ENCODE measurements at regions of chr10 and their contacts with region 1.

Region 1: DNA sequence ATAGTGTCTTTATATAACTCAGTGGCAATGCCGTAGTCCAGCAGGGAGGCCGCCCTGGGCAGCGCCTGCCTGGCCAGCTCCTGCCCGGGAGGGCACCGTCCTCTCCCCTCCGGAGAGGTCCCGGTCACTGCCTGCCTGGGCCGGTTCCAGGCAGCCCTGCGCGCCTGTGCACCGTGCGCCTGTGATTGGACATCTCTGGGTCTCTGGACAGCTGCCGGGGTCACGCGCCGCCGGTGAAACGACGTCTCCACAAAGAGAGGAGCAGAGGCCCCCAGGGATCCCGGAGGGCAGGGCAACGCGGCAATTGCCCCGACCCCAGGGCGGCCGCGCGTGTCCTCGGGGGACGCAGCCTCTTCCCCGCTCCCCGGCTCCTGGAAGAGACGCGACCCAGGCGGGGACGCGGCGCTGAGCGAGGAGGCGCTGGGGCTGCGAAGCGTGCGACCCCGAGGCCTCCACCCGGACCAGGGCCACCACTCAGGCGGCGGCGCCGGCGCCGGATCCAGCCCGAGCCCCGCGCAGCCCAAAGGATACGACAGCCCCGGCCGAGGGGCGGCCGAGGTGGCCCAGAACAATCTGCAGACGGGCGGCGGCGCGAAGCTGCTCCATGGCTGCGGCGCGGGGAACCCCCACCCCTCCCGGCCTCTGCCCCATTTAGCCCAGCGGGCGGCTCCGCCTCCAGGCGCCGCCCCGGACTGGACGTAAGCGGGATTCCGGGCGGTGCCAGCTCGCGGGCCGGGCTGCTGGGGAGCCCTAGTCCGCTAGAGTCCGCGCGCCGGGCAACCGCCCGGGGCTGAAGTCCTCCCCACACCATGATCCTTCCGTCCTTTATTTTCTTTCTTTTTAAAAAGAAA is at the start of gene PHYH:
- DNase-seq: peak; percentile 78
- H3K4me3 ChIP-seq: peak within 1 kb of the TSS; percentile 63 to 68 (median 64)
- H3K27ac ChIP-seq: peak within 1 kb of the TSS; percentile 72
- H3K4me1 ChIP-seq: peaks cover 5% of the 10 kb centered on the region
- H3K27me3 ChIP-seq: no peaks in the 10 kb centered on the region
- CTCF ChIP-seq: no peak
- POLR2A ChIP-seq: peak; percentile 89
- total RNA-seq, gene PHYH: 9.4 and 9.8 TPM in 2 replicates

Region 2: GRCh38 chr10:13206546-13207443 is 92.9 kb before region 1 on chr10:
- CTCF ChIA-PET with region 1: interaction called, 34 read pairs
- POLR2A ChIA-PET with region 1: no interaction called
- dilution Hi-C with region 1: no loop called
- intact Hi-C with region 1: loop called (anchors 1 kb)
- DNase-seq: peak; percentile 49
- H3K4me3 ChIP-seq: no peak overlapping the region
- H3K27ac ChIP-seq: no peak overlapping the region
- H3K4me1 ChIP-seq: no peaks in the 10 kb centered on the region
- H3K27me3 ChIP-seq: no peaks in the 10 kb centered on the region
- CTCF ChIP-seq: peak; percentile 31 to 49
- POLR2A ChIP-seq: no peak

Region 3: GRCh38 chr10:13271552-13272163 is 28.0 kb before region 1 on chr10:
- CTCF ChIA-PET with region 1: interaction called, 26 read pairs
- POLR2A ChIA-PET with region 1: no interaction called
- dilution Hi-C with region 1: no loop called
- intact Hi-C with region 1: loop called (anchors 1 kb)
- DNase-seq: peak; percentile 14
- H3K4me3 ChIP-seq: no peak overlapping the region
- H3K27ac ChIP-seq: no peak overlapping the region
- H3K4me1 ChIP-seq: no peaks in the 10 kb centered on the region
- H3K27me3 ChIP-seq: no peaks in the 10 kb centered on the region
- CTCF ChIP-seq: peak; percentile 46 to 61
- POLR2A ChIP-seq: no peak

Region 4: DNA sequence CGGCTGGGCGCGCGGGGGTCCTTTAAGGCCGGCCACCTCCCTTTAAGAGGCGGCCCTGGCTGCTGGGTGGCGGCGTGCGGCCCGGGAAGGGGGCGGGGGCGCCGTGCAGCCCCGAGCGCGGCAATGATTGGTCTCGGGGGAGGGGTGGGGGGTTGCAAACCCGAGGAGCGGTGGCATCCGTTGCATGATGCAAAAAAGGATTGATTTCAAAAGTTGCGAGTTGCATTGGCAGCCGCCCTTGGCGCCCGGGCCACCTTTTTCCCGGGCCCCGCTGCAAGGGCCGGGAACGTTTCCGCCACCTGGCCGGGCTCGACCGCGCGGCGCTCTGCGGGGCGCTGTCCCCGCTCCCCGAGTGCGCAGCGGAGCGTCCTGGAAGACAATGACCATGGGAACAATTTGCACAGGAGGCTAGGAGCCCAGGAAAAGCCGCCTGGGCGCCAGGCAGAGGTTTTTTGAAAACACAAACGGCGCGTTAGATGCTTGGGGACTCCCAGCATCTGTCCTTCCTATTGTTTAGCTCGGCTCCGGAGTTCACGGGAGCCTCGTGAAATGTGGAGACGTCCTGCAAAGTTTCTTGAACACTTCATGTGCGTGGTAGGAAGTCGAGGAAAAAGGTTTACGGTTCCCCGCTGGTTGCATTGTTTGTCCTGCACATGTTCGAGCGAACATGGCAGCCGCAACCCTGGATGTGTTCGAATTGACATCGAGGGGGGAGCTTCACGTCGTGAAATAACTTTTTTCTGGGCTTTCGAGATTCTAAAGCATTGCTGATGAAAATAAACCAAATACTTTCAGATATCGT is 48.8 kb after region 1 on chr10 and contains the start of gene SEPHS1:
- CTCF ChIA-PET with region 1: interaction called, 3 read pairs
- POLR2A ChIA-PET with region 1: no interaction called
- dilution Hi-C with region 1: no loop called
- intact Hi-C with region 1: loop called (anchors 1 kb)
- DNase-seq: peak; percentile 62
- H3K4me3 ChIP-seq: peak within 1 kb of the TSS; percentile 40 to 84 (median 82)
- H3K27ac ChIP-seq: peak within 1 kb of the TSS; percentile 65
- H3K4me1 ChIP-seq: peaks cover 24% of the 10 kb centered on the region
- H3K27me3 ChIP-seq: peaks cover 30 to 36% of the 10 kb centered on the region in 2 experiments
- CTCF ChIP-seq: peak in 1 of 2 donors; percentile 5
- POLR2A ChIP-seq: no peak
- total RNA-seq, gene SEPHS1: 55.4 and 59.9 TPM in 2 replicates